PC-3 (cell line): ENCODE measurements at regions of chr5 and their contacts with region 1.

Region 1: GRCh38 chr5:51382763-51383490 is at the start of gene ISL1:
- DNase-seq: peak; percentile 87
- ATAC-seq: peak; percentile 71
- H3K4me3 ChIP-seq: peak within 1 kb of the TSS; percentile 86
- H3K27ac ChIP-seq: peak within 1 kb of the TSS; percentile 36
- H3K4me1 ChIP-seq: peaks cover 26% of the 10 kb centered on the region
- H3K27me3 ChIP-seq: no peaks in the 10 kb centered on the region
- CTCF ChIP-seq: no peak
- total RNA-seq, gene ISL1: 1.4 and 1.5 TPM in 2 replicates

Region 2: DNA sequence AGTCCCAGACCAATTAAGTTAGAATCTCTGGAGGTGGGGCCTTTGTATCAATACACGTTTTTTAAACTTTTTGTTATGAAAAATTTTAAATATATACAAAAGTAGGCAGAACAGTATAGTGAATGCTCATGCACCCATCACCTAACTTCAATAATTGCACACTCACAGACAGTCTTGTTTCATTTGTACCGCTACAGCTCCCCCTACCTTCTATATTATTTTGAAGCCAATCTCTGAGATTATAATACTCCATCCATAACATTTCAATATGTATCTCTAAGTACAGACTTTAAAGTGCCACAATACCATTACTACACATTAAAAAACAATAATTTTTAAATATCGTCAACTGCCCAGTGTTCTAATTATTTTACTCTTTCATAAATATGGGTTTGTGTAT is 33.2 kb after region 1 on chr5:
- CTCF ChIA-PET with region 1: no interaction called
- POLR2A ChIA-PET with region 1: no interaction called
- intact Hi-C with region 1: loop called (anchors 1 kb)
- DNase-seq: peak; percentile 26
- ATAC-seq: peak; percentile 61
- H3K4me3 ChIP-seq: no peak overlapping the region
- H3K27ac ChIP-seq: no peak overlapping the region
- H3K4me1 ChIP-seq: no peaks in the 10 kb centered on the region
- H3K27me3 ChIP-seq: no peaks in the 10 kb centered on the region
- CTCF ChIP-seq: peak; percentile 46

Region 3: GRCh38 chr5:51495672-51496071 is 112.7 kb after region 1 on chr5:
- CTCF ChIA-PET with region 1: no interaction called
- POLR2A ChIA-PET with region 1: no interaction called
- intact Hi-C with region 1: loop called (anchors 10 kb)
- DNase-seq: peak; percentile 76
- ATAC-seq: peak; percentile 84
- H3K4me3 ChIP-seq: no peak overlapping the region
- H3K27ac ChIP-seq: peak overlapping the region; percentile 11; the same call in 1 of the 2 replicates
- H3K4me1 ChIP-seq: peaks cover 12% of the 10 kb centered on the region
- H3K27me3 ChIP-seq: no peaks in the 10 kb centered on the region
- CTCF ChIP-seq: no peak

Region 4: DNA sequence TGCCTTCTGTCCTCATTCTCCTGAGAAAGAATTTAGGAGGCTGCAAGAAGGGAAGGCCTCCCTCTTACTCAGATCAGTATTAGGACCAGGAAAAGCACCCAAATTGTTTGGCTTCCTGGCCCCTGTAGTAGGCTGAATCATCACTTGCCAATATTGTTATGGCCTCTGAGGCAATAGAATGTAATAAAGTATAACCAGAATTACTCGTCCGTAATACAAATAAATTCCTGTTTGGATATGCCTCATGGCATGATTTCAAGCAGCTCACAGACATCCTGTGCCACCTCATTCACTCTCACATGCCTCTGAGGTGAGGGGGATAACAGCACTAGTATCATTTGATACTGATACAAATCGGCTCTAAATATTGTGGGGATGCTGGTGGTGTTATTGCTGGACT is 427.7 kb after region 1 on chr5:
- CTCF ChIA-PET with region 1: no interaction called
- POLR2A ChIA-PET with region 1: no interaction called
- intact Hi-C with region 1: loop called (anchors 10 kb)
- DNase-seq: peak; percentile 88
- ATAC-seq: peak; percentile 93
- H3K4me3 ChIP-seq: no peak overlapping the region
- H3K27ac ChIP-seq: peak overlapping the region; percentile 94
- H3K4me1 ChIP-seq: peaks cover 42% of the 10 kb centered on the region
- H3K27me3 ChIP-seq: no peaks in the 10 kb centered on the region
- CTCF ChIP-seq: no peak

Region 5: GRCh38 chr5:51860532-51861018 is 477.6 kb after region 1 on chr5:
- CTCF ChIA-PET with region 1: interaction called, 11 read pairs
- POLR2A ChIA-PET with region 1: no interaction called
- intact Hi-C with region 1: no loop called
- DNase-seq: peak; percentile 82
- ATAC-seq: peak; percentile 96
- H3K4me3 ChIP-seq: no peak overlapping the region
- H3K27ac ChIP-seq: peak overlapping the region; percentile 68
- H3K4me1 ChIP-seq: peaks cover 16% of the 10 kb centered on the region
- H3K27me3 ChIP-seq: no peaks in the 10 kb centered on the region
- CTCF ChIP-seq: no peak

Region 6: GRCh38 chr5:52007230-52007858 is 624.4 kb after region 1 on chr5:
- CTCF ChIA-PET with region 1: no interaction called
- POLR2A ChIA-PET with region 1: no interaction called
- intact Hi-C with region 1: loop called (anchors 2 kb)
- DNase-seq: peak; percentile 51
- ATAC-seq: peak; percentile 76
- H3K4me3 ChIP-seq: no peak overlapping the region
- H3K27ac ChIP-seq: no peak overlapping the region
- H3K4me1 ChIP-seq: no peaks in the 10 kb centered on the region
- H3K27me3 ChIP-seq: no peaks in the 10 kb centered on the region
- CTCF ChIP-seq: peak; percentile 81